Spleen (tissue), 13 donors: ENCODE measurements at regions of chr11 and their contacts with region 1.

Region 1: GRCh38 chr11:117107701-117108590 is 9.7 kb upstream of the SIK3 start:
- DNase-seq: no peak
- H3K4me3 ChIP-seq: no peak overlapping the region
- H3K27ac ChIP-seq: no peak overlapping the region
- H3K4me1 ChIP-seq: peaks cover 0 to 8% (median 3%) of the 10 kb centered on the region in 6 donors
- H3K27me3 ChIP-seq: no peaks in the 10 kb centered on the region
- CTCF ChIP-seq: no peak
- POLR2A ChIP-seq: no peak

Region 2: GRCh38 chr11:116791002-116791812 is 316.7 kb before region 1 on chr11:
- intact Hi-C with region 1: loop called (anchors 2 kb)
- DNase-seq: peak; percentile 92
- H3K4me3 ChIP-seq: peak overlapping the region in 1 of 8 donors; percentile 46
- H3K27ac ChIP-seq: no peak overlapping the region
- H3K4me1 ChIP-seq: peaks cover 11 to 38% (median 32%) of the 10 kb centered on the region in 6 donors
- H3K27me3 ChIP-seq: peaks cover 0 to 19% (median 0%) of the 10 kb centered on the region in 7 donors
- CTCF ChIP-seq: peak; percentile 59 to 95 (median 91)
- POLR2A ChIP-seq: no peak

Region 3: DNA sequence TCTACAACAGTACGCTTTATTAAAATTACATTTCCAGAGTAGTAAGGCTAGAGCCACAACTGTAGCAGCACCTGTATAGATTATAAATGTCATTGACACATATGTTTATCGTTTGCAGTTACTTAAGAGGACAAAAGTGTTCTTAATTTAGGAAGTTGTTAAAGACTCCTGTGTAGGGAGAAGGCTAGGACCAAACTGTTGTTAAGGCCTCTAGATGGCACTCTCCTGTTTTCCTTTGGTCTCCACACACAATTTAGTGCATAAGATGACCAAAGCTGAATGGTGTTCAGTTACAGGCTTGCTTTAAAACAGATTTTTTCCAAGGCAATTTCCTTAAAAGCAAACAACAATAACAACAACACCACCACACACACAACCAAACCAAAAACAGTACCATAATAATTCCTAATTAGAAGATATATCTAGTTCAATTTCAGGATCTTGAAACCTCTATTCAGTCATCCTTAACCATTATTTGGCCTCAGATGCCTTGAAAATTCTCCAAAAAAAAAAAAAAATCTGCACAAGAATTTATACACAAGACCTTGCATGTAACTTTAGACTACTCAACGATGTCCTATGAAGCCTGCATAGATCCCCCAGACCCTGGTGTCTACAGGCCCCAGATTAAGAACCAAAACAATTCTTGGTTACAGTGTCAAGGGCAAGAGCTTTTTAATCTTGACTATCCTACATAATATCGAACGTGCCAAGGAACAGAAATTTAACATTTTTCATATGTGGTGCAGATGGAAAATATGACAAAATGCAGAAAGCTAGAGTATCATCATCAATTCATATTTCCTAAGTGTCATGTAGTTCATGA is 227.9 kb before region 1 on chr11:
- intact Hi-C with region 1: loop called (anchors 5 kb)
- DNase-seq: no peak
- H3K4me3 ChIP-seq: no peak overlapping the region
- H3K27ac ChIP-seq: no peak overlapping the region
- H3K4me1 ChIP-seq: peaks cover 0 to 17% (median 3%) of the 10 kb centered on the region in 6 donors
- H3K27me3 ChIP-seq: no peaks in the 10 kb centered on the region
- CTCF ChIP-seq: peak in 10 of 11 experiments; percentile 18 to 81 (median 65)
- POLR2A ChIP-seq: no peak

Region 4: GRCh38 chr11:117226388-117227385 is 118.7 kb after region 1 on chr11:
- intact Hi-C with region 1: loop called (anchors 10 kb)
- DNase-seq: no peak
- H3K4me3 ChIP-seq: no peak overlapping the region
- H3K27ac ChIP-seq: no peak overlapping the region
- H3K4me1 ChIP-seq: peaks cover 25 to 78% (median 59%) of the 10 kb centered on the region in 6 donors
- H3K27me3 ChIP-seq: no peaks in the 10 kb centered on the region
- CTCF ChIP-seq: peak; percentile 70 to 91 (median 87)
- POLR2A ChIP-seq: no peak

Region 5: DNA sequence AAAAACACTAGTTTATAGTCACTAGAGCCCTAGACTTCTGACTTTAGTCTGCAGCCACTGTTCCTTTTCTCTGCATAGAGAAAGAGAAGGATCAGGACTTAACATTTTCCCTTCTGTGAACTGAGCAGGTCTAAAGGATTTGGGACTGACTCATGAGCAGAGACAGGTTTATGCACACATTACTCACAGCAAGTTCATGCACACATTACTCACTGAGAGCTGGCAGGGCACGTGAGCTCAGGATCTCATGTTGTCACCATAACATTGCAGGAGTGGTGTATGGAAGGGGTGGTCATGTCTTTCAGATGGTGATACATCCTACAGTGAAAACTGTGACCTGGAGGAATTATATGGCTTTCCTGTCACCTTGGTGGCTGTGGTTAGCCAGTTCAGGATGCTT is 276.1 kb after region 1 on chr11:
- intact Hi-C with region 1: no loop called
- DNase-seq: no peak
- H3K4me3 ChIP-seq: no peak overlapping the region
- H3K27ac ChIP-seq: no peak overlapping the region
- H3K4me1 ChIP-seq: no peaks in the 10 kb centered on the region
- H3K27me3 ChIP-seq: no peaks in the 10 kb centered on the region
- CTCF ChIP-seq: no peak
- POLR2A ChIP-seq: no peak